H1 (cell line): ENCODE measurements at regions of chr1 and their contacts with region 1.

Region 1: GRCh38 chr1:51897699-51898031 is 19.1 kb upstream of the NRDC start:
- DNase-seq: no peak
- H3K4me3 ChIP-seq: no peak overlapping the region
- H3K27ac ChIP-seq: no peak overlapping the region
- H3K4me1 ChIP-seq: no peaks in the 10 kb centered on the region
- H3K27me3 ChIP-seq: no peaks in the 10 kb centered on the region
- CTCF ChIP-seq: no peak
- EP300 ChIP-seq: no peak
- POLR2A ChIP-seq: no peak
- RAD21 ChIP-seq: no peak

Region 2: GRCh38 chr1:51916587-51917405 is 19.1 kb after region 1 on chr1:
- CTCF ChIA-PET with region 1: interaction called, 84 read pairs
- POLR2A ChIA-PET with region 1: no interaction called
- DNase-seq: no peak
- H3K4me3 ChIP-seq: no peak overlapping the region
- H3K27ac ChIP-seq: no peak overlapping the region
- H3K4me1 ChIP-seq: peaks cover 0 to 2% (median 0%) of the 10 kb centered on the region in 4 experiments; a peak in 1 of 7 replicates
- H3K27me3 ChIP-seq: no peaks in the 10 kb centered on the region; a peak in 1 of 7 replicates
- CTCF ChIP-seq: no peak
- EP300 ChIP-seq: no peak
- POLR2A ChIP-seq: no peak
- RAD21 ChIP-seq: no peak

Region 3: DNA sequence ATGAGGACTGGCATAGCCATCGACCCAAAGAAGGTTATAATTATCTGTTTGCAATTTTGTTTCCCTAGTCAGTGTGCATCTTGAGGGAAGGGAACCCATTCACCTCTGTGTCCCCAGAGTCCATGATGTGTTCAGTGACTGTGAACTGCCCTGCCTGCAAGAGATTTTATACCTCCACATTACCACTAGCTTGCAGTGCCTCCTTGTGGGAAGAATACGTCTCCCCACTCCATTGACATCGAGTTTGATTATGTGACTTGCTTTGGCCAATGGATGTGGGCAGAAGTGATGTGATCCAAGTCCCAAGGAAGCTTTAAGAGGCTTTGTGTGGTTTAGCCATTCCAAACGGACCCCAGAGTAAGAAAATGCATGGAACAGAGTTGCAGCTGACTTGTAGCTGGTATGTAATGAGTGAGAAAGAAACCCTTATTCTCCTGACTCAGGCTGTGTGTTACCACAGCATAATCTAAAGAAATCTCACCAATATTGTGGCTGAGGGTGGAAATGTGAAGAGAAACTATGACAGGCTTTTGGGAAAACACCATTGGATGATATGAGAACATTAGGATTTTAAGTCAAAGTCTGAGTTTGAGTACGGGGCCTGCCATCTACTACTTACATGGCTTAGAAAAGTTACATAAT is 28.6 kb after region 1 on chr1:
- CTCF ChIA-PET with region 1: interaction called, 84 read pairs
- POLR2A ChIA-PET with region 1: no interaction called
- DNase-seq: no peak
- H3K4me3 ChIP-seq: no peak overlapping the region
- H3K27ac ChIP-seq: no peak overlapping the region
- H3K4me1 ChIP-seq: no peaks in the 10 kb centered on the region
- H3K27me3 ChIP-seq: no peaks in the 10 kb centered on the region
- CTCF ChIP-seq: peak; percentile 20 to 73 (median 55)
- EP300 ChIP-seq: no peak
- POLR2A ChIP-seq: no peak
- RAD21 ChIP-seq: peak; percentile 66 to 82

Region 4: DNA sequence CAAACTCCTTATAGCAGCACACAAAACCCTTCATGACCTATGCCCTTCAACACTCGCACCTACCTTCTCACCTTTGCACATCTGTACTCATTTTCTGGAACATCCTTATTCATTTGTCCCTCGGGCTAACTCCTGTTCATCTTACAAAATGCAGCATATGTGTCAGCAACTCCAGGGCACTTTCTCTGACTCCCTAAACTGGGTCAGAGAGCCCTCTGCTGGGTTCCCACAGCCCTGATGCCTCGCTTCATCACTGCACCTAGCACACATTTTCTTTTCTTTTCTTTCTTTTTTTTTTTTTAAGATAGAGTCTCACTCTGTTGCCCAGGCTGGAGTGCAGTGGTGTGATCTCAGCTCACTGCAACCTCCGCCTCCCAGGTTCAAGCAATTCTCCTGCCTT is 38.9 kb after region 1 on chr1:
- CTCF ChIA-PET with region 1: interaction called, 24 read pairs
- POLR2A ChIA-PET with region 1: interaction called, 3 read pairs
- DNase-seq: no peak
- H3K4me3 ChIP-seq: no peak overlapping the region
- H3K27ac ChIP-seq: no peak overlapping the region
- H3K4me1 ChIP-seq: no peaks in the 10 kb centered on the region
- H3K27me3 ChIP-seq: no peaks in the 10 kb centered on the region
- CTCF ChIP-seq: no peak
- EP300 ChIP-seq: no peak
- POLR2A ChIP-seq: no peak
- RAD21 ChIP-seq: no peak

Region 5: GRCh38 chr1:52002038-52002917 is 104.6 kb after region 1 on chr1:
- CTCF ChIA-PET with region 1: interaction called, 35 read pairs
- POLR2A ChIA-PET with region 1: interaction called, 3 read pairs
- DNase-seq: peak in 1 of 2 experiments; percentile 65
- H3K4me3 ChIP-seq: no peak overlapping the region
- H3K27ac ChIP-seq: no peak overlapping the region
- H3K4me1 ChIP-seq: peaks cover 9 to 19% (median 18%) of the 10 kb centered on the region in 4 experiments; a peak in 6 of 7 replicates
- H3K27me3 ChIP-seq: no peaks in the 10 kb centered on the region; a peak in 1 of 7 replicates
- CTCF ChIP-seq: peak; percentile 48 to 98 (median 83)
- EP300 ChIP-seq: no peak
- POLR2A ChIP-seq: no peak
- RAD21 ChIP-seq: peak; percentile 99